GM12878 (cell line): ENCODE measurements at regions of chr19 and their contacts with region 1.

Region 1: GRCh38 chr19:7808133-7808532 is 21.9 kb upstream of the EVI5L start:
- DNase-seq: no peak
- ATAC-seq: no peak
- H3K4me3 ChIP-seq: no peak overlapping the region; the same call in 1 of the 2 replicates
- H3K27ac ChIP-seq: peak overlapping the region; percentile 32; the same call in 1 of the 2 replicates
- H3K4me1 ChIP-seq: peaks cover 15% of the 10 kb centered on the region
- H3K27me3 ChIP-seq: no peaks in the 10 kb centered on the region
- CTCF ChIP-seq: no peak
- EP300 ChIP-seq: no peak
- POLR2A ChIP-seq: no peak
- RAD21 ChIP-seq: no peak

Region 2: GRCh38 chr19:7104747-7105447 is 703.2 kb before region 1 on chr19:
- CTCF ChIA-PET with region 1: no interaction called
- POLR2A ChIA-PET with region 1: no interaction called
- RAD21 ChIA-PET with region 1: no interaction called
- SMC1A ChIA-PET with region 1: no interaction called
- in situ Hi-C with region 1: no loop called
- intact Hi-C with region 1: loop called (anchors 5 kb)
- DNase-seq: peak; percentile 40
- ATAC-seq: peak; percentile 56
- H3K4me3 ChIP-seq: no peak overlapping the region
- H3K27ac ChIP-seq: no peak overlapping the region
- H3K4me1 ChIP-seq: peaks cover 11% of the 10 kb centered on the region
- H3K27me3 ChIP-seq: no peaks in the 10 kb centered on the region
- CTCF ChIP-seq: no peak
- EP300 ChIP-seq: no peak
- POLR2A ChIP-seq: no peak
- RAD21 ChIP-seq: 0 out of 2 replicates have a peak, but pooled peaks have one; percentile 5